Activated naive CD4-positive, alpha-beta T cell treated with anti-CD3 and anti-CD28 coated beads for 36 hours (primary cell): ENCODE measurements at regions of chr16 and their contacts with region 1.

Region 1: DNA sequence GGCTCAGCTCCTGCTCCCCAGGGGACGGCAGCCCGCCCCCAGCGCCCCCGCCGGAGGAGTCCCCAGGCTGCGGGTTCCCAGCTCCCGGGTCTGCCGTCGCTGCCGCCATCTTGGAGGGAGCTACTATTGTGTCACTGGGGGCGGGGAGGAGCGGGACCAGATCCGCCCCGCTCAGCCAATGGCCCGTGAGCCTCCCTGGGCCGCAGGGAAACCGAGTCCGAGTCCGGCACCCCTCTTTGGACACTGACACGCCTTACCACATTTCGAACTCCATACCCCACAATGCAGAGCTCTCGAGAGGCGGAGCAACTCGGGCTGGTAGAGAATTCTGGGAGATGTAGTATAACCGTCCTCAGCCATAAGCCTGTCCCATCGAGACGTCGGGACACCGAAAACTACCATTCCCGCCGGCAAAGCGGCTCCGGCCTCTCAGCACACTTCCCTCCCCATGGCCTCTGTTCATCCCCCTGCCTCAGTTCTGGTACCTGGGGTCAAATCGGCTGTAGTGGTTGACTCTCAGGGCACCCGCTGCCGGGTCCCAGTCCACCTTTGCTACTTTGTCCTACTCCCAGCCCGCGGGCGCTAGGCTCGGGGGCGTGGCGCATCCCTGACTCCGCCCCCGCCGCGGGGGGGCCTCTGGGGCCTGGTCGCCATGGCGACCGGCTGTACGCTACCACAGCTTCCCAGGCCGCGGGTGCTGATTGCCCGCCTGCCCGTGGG is at the starts of genes RANBP10 and TSNAXIP1:
- DNase-seq: peak; percentile 98
- H3K4me3 Mint-ChIP-seq: peak within 1 kb of the TSS; percentile 86
- H3K27ac Mint-ChIP-seq: peak within 1 kb of the TSS; percentile 81
- H3K4me1 Mint-ChIP-seq: peaks cover 36% of the 10 kb centered on the region
- H3K27me3 Mint-ChIP-seq: no peaks in the 10 kb centered on the region
- total RNA-seq, gene RANBP10: 12.4 to 16.1 TPM
- total RNA-seq, gene TSNAXIP1: 0.35 to 0.50 TPM

Region 2: DNA sequence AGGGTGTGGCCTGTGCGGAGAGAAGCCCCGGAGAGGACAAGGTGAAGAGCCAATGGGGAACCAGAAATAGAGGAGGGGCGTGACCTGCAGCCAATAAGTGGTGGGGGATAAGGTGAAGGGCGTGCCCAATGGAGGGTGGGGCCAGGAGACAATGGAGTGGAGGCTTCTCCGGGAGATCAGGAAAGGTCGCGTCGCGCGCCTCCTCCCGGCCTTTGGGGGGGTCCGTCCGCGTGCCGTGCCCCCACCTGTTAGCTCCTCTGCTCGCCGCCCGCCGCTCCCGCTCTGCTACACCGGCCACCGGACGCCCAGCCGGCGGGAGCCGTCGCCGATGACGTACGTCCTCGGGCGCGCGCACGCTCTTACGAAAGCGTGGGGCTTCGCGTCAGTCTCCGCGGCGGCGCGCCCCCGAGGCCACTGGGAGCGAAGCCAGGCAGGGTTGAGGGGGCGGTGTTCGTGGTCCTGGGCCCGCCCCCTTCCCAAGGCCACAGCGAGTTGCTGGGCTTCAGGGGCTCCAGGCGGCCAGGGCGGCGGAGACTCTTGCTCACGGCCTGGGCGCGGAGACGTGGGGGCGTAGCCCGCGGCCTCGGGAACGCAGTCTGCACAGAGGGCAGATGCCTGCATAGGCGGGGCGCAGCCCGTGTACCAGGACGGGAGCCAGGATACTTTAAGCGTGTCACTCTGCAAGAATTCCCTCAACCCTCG is 622.8 kb before region 1 on chr16 and contains the start of gene MATCAP1:
- CTCF ChIA-PET with region 1: no interaction called
- intact Hi-C with region 1: loop called (anchors 2 kb)
- DNase-seq: peak; percentile 97
- H3K4me3 Mint-ChIP-seq: peak within 1 kb of the TSS; percentile 50
- H3K27ac Mint-ChIP-seq: no peak within 1 kb of the TSS
- H3K4me1 Mint-ChIP-seq: peaks cover 12% of the 10 kb centered on the region
- H3K27me3 Mint-ChIP-seq: peaks cover 17% of the 10 kb centered on the region
- total RNA-seq, gene MATCAP1: 21.9 to 24.0 TPM

Region 3: GRCh38 chr16:67521095-67521804 is 285.3 kb before region 1 on chr16:
- CTCF ChIA-PET with region 1: interaction called, 4 read pairs
- intact Hi-C with region 1: loop called (anchors 2 kb)
- DNase-seq: peak; percentile 100
- H3K4me3 Mint-ChIP-seq: peak overlapping the region; percentile 84
- H3K27ac Mint-ChIP-seq: peak overlapping the region; percentile 96
- H3K4me1 Mint-ChIP-seq: peaks cover 11% of the 10 kb centered on the region
- H3K27me3 Mint-ChIP-seq: no peaks in the 10 kb centered on the region

Region 4: DNA sequence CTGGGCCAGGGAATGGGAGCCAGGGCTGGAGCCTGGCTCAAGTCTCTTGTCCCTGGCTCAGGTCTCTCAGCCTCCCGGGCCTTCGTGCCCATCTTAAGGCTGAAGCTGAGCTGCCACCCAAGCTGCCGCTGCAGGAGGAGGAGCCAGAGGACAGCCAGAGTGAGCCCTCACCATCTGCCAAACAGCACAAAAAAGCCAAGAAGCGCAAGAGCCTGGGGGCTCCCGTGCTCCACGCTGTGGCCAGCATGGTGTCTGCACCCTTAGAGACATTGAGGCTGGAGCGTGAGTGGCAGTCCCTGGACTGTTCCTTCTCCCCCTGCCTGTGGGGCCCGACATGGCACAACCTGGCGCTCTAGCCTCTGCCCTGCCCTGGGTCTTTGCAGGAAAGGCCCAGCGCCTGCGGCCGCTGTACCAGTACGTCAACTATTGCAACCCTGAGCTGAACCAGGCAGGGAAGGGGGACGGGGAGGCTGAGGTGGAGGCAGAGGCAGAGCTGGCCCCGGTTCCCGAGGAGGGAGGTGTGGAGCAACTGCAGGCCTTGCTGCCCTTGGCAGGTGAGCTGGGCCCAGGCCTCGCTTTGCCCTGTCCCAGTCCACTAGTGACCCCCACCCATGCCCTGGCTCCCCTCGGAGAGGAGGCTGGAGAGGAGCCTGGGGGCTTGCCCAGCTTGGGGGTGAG is 138.6 kb before region 1 on chr16:
- CTCF ChIA-PET with region 1: interaction called, 4 read pairs
- intact Hi-C with region 1: loop called (anchors 1 kb)
- DNase-seq: peak; percentile 91
- H3K4me3 Mint-ChIP-seq: peak overlapping the region; percentile 90
- H3K27ac Mint-ChIP-seq: no peak overlapping the region
- H3K4me1 Mint-ChIP-seq: peaks cover 17% of the 10 kb centered on the region
- H3K27me3 Mint-ChIP-seq: no peaks in the 10 kb centered on the region

Region 5: GRCh38 chr16:67783353-67783725 is 23.2 kb before region 1 on chr16:
- CTCF ChIA-PET with region 1: no interaction called
- intact Hi-C with region 1: no loop called
- DNase-seq: no peak
- H3K4me3 Mint-ChIP-seq: no peak overlapping the region
- H3K27ac Mint-ChIP-seq: no peak overlapping the region
- H3K4me1 Mint-ChIP-seq: peaks cover 34% of the 10 kb centered on the region
- H3K27me3 Mint-ChIP-seq: no peaks in the 10 kb centered on the region

Region 6: GRCh38 chr16:67841764-67842508 is 35.3 kb after region 1 on chr16 and contains the start of gene THAP11:
- CTCF ChIA-PET with region 1: interaction called, 3 read pairs
- intact Hi-C with region 1: loop called (anchors 1 kb)
- DNase-seq: peak; percentile 97
- H3K4me3 Mint-ChIP-seq: peak within 1 kb of the TSS; percentile 91
- H3K27ac Mint-ChIP-seq: peak within 1 kb of the TSS; percentile 98
- H3K4me1 Mint-ChIP-seq: peaks cover 33% of the 10 kb centered on the region
- H3K27me3 Mint-ChIP-seq: no peaks in the 10 kb centered on the region
- total RNA-seq, gene THAP11: 19.9 to 20.6 TPM

Region 7: DNA sequence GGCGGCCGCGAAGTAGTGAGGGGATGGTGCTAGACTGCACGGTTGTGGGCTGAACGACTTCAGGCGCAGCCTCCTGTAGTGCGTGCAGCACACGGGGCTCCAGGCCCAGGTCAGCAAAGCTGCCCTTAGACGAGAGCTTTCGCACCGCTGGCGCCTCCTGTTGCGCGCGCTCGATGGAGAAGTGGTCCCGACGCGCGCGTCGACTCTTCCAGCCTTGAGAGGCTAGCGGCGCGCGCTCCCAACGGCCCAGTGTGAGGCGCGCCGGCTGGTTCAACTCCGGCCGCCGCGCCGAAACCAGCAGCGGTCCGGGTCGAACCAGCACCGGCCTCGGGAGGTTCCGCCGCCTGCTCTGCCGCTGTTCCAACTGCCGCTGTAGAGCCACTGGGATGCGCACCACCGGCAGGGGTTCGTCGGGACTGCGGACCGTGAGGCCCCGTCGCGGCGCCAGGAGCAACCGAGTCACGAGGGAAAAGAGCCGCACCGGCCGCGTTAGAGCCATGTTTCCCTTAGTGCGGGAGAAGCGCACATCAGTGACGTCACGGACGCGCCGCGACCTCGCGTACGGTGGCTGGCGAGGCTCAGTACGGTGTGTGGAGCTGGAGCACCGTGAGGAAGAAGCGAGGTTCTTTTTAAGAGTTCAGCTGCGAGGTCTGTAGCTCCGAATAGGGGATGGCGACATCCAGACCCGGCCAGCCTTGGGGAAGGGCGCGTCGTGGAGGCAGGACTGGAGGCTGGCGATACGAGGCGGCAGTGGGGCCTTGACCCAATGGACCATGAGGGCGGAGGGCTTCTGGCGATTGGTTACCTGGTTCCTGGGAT is 216.3 kb after region 1 on chr16 and contains the starts of genes DDX28 and DUS2:
- CTCF ChIA-PET with region 1: no interaction called
- intact Hi-C with region 1: loop called (anchors 2 kb)
- DNase-seq: peak; percentile 96
- H3K4me3 Mint-ChIP-seq: peak within 1 kb of the TSS; percentile 99
- H3K27ac Mint-ChIP-seq: peak within 1 kb of the TSS; percentile 94
- H3K4me1 Mint-ChIP-seq: peaks cover 38% of the 10 kb centered on the region
- H3K27me3 Mint-ChIP-seq: no peaks in the 10 kb centered on the region
- total RNA-seq, gene DDX28: 9.4 to 9.7 TPM
- total RNA-seq, gene DUS2: 22.9 to 25.2 TPM